ENCODE measurements at regions of chr12 and their contacts with region 1.

Region 1: GRCh38 chr12:113912760-113913329 is 53.3 kb downstream of the RBM19 start:
- ATAC-seq: peak; percentile 83 to 95 (median 90)
- H3K4me3 ChIP-seq: no peak overlapping the region
- H3K27ac ChIP-seq: no peak overlapping the region
- H3K4me1 ChIP-seq: peaks cover 5 to 8% of the 10 kb centered on the region in 2 donors

Region 2: DNA sequence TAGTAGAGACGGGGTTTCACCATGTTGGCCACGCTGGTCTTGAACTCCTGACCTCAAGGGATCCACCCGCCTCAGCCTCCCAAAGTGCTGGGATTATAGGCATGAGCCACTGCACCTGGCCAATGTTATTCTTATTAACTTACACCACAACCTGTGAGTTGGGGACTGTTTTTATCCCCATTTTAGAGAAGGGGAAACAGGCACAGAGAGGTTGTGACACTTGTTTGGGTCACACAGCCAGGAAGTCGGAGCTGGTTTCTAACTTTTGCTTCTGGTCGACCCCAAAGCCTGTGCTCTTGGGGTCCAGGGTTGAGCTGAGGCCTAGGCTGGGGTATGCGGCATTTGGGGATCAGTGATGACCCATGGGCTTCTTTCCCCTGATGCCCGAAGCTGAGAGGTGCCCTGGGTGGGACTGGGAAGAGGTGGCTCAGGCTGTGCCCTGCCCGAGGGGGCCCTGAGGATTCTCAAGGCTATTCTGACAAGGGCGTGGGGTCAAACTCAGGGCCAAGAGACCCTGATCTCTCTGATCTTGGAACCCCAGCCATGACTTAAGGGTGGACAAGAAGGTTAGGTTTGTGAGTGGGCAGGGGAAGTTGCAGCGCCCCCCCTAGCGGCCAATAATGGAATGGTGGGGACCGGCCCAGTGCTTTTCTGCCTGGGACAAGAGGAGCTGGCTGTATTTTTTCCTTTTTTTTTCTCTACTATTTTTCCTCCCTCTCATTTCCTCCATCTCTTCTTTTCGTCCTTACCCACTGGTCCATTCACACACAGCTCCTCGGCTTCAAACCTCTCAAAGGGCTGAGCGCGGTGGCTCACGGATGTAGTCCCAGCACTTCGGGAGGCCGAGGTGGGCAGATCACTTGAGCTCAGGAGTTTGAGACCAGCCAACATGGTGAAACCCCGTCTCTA is 487.7 kb before region 1 on chr12:
- in situ Hi-C with region 1: loop called in 1 of 9 experiments (anchors 25 kb)
- ATAC-seq: peak in 3 of 8 experiments; percentile 34 to 44 (median 38)
- H3K4me3 ChIP-seq: no peak overlapping the region
- H3K27ac ChIP-seq: no peak overlapping the region
- H3K4me1 ChIP-seq: peaks cover 7 to 12% of the 10 kb centered on the region in 2 donors

Region 3: DNA sequence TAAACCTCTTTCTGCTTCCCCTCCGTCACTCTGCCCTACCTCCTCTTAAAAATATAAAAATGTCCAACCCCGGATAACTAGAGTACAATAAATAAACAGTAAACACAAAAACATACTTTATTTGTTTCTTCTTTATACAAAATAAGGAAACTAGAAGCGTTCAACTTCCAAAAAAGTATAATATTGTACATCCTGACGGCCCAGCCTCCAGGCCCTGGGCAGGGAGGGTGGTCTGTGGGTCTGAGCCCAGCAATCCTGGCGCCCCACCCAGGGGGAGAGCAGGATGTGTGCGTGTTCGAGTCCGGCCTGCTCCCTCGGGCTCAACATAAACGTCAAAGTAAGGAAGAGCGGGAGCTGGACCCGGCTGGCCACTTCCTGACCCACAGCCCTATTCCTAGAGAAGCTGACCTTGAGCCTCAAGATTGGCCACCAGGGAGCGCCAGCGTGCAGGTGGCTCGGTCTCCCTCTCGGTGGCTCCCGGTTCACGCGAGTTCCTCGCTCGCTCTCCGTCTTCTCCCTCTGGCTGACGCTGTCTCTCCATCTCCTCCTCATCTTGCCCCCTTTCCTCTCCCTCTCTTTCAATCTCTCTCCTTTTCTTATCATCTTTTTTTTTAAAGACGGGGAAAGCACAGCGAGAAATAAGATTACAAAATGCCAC is 450.6 kb before region 1 on chr12:
- in situ Hi-C with region 1: loop called in 7 of 9 experiments (anchors 10 to 25 kb)
- ATAC-seq: peak; percentile 90 to 93 (median 91)
- H3K4me3 ChIP-seq: peak overlapping the region in 1 of 5 donors; percentile 2
- H3K27ac ChIP-seq: no peak overlapping the region
- H3K4me1 ChIP-seq: peaks cover 11 to 34% of the 10 kb centered on the region in 2 donors